ENCODE measurements at regions of chr6 and their contacts with region 1.

Region 1: DNA sequence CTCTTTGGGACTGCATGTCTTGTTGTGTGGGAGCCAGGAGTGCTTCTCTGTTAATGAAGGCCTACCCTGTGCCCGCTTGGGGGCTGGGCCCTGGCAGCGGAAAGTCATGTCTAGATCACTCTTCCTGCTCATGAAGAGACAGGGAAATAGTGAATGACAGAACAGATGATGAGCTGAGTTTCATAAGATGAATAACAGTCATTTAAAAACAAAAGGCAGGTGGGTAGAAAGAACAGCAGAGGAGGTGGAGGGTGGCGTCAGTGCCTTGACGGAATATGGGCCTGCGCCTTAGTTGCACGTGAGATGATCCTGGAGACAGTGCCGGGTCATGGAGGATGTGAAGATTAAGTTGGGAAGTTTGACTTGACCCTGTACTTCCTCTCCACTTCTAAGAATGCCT is 85.5 kb downstream of the ARID1B start:
- DNase-seq: no peak
- H3K4me3 ChIP-seq: no peak overlapping the region
- H3K4me3 Mint-ChIP-seq: no peak overlapping the region
- H3K27ac ChIP-seq: peak overlapping the region; percentile 9 to 17
- H3K27ac Mint-ChIP-seq: peak overlapping the region in 6 of 7 donors; percentile 8 to 71 (median 48)
- H3K4me1 ChIP-seq: peaks cover 30 to 36% of the 10 kb centered on the region in 2 donors
- H3K4me1 Mint-ChIP-seq: peaks cover 54% of the 10 kb centered on the region
- H3K27me3 ChIP-seq: no peaks in the 10 kb centered on the region
- H3K27me3 Mint-ChIP-seq: no peaks in the 10 kb centered on the region
- CTCF ChIP-seq: no peak

Region 2: DNA sequence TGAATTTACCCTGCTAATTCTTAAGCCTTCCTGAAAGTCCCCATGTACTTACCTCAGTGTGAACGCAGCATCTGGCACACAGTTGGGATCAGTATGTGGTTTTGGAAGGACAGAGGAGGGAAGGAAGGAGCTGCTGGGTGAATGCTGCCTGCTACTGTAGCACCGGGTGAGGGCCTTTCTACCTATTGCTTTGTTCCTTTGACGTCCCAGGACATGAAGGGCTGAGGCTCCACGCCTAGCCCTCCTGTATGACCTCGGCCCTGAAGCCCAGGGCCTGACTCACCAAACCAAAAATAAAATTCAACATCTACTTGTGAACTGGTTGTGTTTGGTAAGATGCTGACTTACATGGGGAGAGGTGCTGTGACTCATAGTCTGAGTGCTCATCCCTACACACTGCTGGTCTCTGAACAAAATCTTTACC is 34.4 kb before region 1 on chr6:
- intact Hi-C with region 1: loop called in 1 of 2 experiments (anchors 5 kb)
- DNase-seq: peak in 1 of 3 donors; percentile 15
- H3K4me3 ChIP-seq: no peak overlapping the region
- H3K4me3 Mint-ChIP-seq: no peak overlapping the region
- H3K27ac ChIP-seq: peak overlapping the region in 1 of 2 donors; percentile 49
- H3K27ac Mint-ChIP-seq: peak overlapping the region in 2 of 7 donors; percentile 28 to 37
- H3K4me1 ChIP-seq: no peaks in the 10 kb centered on the region
- H3K4me1 Mint-ChIP-seq: peaks cover 19% of the 10 kb centered on the region
- H3K27me3 ChIP-seq: no peaks in the 10 kb centered on the region
- H3K27me3 Mint-ChIP-seq: peaks cover 0 to 2% (median 0%) of the 10 kb centered on the region in 3 donors
- CTCF ChIP-seq: no peak

Measured in CD14-positive monocyte (primary cell).